GM13977 (cell line): ENCODE measurements at regions of chr16 and their contacts with region 1.

Region 1: DNA sequence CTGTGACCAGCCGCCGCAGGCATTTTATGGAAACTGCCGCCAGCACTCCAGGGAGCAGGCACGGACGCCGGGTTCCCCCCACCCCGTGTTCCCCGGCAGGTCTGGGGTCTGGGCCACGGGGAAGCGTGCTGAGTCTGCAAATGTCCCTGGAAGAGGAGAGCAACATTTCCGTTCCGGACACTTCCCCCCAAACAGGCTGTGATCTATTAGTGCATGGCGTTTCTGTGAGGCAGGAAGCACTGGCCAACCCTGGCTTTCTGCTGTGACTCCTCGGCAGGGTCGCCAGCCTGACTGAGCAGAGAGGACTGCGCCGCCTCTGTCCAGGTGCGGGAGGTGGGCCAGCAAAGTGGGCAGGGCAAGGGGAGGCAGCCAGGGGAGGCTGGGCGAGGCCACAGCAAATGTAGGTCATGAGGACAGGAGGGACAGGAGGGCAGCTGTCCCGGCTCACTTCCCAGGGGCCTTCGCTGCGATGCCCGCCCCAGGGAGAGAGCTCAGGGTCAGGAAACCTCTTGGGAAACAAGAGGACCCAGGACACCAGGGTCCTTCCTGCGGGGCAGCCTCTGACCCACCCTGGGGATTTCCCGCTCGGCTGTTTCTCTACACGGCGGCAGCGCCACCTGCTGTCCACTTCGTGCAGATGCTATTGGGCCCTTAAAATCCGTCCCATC is 9.5 kb downstream of the FOXF1 start:
- DNase-seq: peak; percentile 83
- CTCF ChIP-seq: peak; percentile 91

Region 2: GRCh38 chr16:85799497-85800337 is 720.1 kb before region 1 on chr16 and contains the starts of genes COX4I1 and EMC8:
- in situ Hi-C with region 1: loop called (anchors 25 kb)
- DNase-seq: peak; percentile 98
- CTCF ChIP-seq: no peak

Region 3: DNA sequence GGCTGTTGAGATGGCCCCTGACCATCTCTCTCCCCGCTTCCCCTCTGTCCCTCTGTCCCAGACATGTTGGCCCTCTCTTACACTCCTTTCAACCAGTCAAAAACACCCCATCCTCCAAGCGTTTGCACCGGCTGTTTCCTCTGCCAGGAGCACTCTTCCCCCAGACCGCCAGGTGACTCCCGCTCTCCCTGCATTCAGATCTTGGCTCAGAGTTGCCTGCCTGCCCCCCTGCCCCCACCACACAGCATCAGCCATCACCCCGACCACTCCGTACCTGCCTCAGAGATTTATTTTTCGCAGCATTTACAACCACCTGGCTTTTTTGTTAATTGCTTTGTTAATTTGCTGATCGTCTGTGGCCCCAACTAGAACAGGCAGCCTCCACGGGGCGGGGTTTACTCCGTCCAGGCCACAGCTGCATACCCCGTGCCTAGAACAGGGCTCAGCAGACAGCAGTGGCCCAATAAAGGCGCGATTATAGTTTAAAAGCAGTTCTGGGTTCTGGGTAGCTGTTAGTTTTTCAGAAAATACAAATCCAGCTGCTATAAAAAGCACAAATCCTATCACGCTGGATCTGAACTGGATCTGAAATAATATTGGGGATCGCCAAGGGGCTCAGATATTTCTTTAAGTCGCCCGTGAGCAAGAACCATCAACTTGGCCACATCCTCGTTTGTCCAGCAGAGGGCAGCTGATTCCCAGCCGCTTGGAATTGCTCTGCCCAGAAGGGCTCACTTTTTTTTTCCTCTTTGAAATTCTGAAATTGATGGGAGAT is 447.3 kb before region 1 on chr16:
- in situ Hi-C with region 1: loop called (anchors 25 kb)
- DNase-seq: peak; percentile 76
- CTCF ChIP-seq: peak; percentile 82